ENCODE measurements at regions of chr17 and their contacts with region 1.

Region 1: GRCh38 chr17:44775136-44775837 is 16.5 kb downstream of the ADAM11 start:
- DNase-seq: peak; percentile 99
- H3K4me3 Mint-ChIP-seq: peak overlapping the region; percentile 85
- H3K27ac Mint-ChIP-seq: peak overlapping the region; percentile 90
- H3K4me1 Mint-ChIP-seq: peaks cover 17% of the 10 kb centered on the region
- H3K27me3 Mint-ChIP-seq: peaks cover 70% of the 10 kb centered on the region

Region 2: GRCh38 chr17:44473367-44473766 is 301.9 kb before region 1 on chr17:
- CTCF ChIA-PET with region 1: no interaction called
- DNase-seq: no peak
- H3K4me3 Mint-ChIP-seq: no peak overlapping the region
- H3K27ac Mint-ChIP-seq: no peak overlapping the region
- H3K4me1 Mint-ChIP-seq: no peaks in the 10 kb centered on the region
- H3K27me3 Mint-ChIP-seq: no peaks in the 10 kb centered on the region

Region 3: GRCh38 chr17:44565866-44566443 is 209.3 kb before region 1 on chr17:
- CTCF ChIA-PET with region 1: no interaction called
- DNase-seq: no peak
- H3K4me3 Mint-ChIP-seq: no peak overlapping the region
- H3K27ac Mint-ChIP-seq: no peak overlapping the region
- H3K4me1 Mint-ChIP-seq: no peaks in the 10 kb centered on the region
- H3K27me3 Mint-ChIP-seq: peaks cover 42% of the 10 kb centered on the region

Region 4: DNA sequence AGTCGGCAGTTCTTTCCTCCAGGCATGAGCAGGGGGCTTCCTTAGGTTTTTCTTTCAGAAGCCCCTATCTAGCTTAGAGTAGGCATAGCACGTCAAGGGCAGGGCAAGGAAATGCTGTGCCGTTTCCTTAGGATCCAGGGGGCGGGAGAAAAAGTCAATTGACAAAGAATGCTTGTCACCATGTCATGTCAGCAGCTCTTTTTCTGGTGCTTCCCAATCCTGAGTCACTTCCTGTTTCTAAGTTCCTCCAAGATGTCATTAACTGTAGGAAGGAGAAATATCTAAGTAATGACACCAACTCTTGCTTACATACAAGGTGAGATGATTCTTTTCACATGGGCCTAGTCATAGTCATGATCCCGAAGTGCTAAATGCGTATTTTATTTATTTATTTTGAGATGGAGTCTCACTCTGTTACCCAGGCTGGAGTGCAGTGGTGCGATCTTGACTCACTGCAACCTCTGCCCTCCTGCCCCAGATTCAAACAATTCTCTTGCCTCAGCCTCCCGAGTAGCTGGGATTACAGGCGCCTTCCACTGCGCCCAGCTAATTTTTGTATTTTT is 19.6 kb after region 1 on chr17:
- CTCF ChIA-PET with region 1: interaction called, 14 read pairs
- DNase-seq: no peak
- H3K4me3 Mint-ChIP-seq: no peak overlapping the region
- H3K27ac Mint-ChIP-seq: no peak overlapping the region
- H3K4me1 Mint-ChIP-seq: peaks cover 8% of the 10 kb centered on the region
- H3K27me3 Mint-ChIP-seq: peaks cover 11% of the 10 kb centered on the region

Region 5: GRCh38 chr17:44807817-44808155 is 32.5 kb after region 1 on chr17:
- CTCF ChIA-PET with region 1: interaction called, 10 read pairs
- DNase-seq: no peak
- H3K4me3 Mint-ChIP-seq: no peak overlapping the region
- H3K27ac Mint-ChIP-seq: no peak overlapping the region
- H3K4me1 Mint-ChIP-seq: no peaks in the 10 kb centered on the region
- H3K27me3 Mint-ChIP-seq: peaks cover 36% of the 10 kb centered on the region

Region 6: DNA sequence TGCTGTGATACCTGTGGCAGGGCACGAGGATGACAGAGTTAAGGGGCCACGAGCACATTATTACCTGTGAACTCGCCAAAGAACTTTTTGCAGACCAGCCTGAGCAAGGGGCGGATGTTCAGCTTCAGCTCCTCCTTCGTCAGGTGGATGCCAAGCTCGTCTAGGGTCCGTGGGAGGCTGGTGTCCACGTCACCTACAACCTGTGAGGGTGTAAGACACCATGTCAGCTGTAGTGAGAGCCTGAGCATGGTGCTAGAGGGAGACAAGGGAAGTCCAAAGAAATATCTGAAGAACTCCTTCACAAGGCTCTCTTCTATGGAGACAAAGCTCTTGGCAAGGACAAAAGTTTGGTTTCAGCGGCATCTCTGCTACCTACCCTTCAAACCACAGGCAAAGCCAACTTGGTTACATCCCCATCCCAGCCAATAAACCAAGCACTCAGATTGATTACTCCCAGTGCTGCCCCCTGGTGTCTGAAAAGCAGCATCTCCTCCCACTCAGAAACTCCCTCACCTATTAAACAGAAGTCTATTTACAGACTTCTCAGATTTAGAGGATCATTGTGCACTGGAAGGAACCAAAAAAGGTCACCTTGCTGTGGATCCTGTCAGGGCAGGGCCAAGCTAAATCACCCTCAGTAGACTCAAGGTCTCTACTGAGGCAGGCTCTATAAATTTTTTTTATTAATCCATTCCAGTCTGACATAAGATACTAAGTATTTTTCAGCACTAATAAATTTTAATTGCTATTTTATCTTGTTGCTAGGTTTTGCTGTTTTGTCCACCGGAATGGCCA is 89.8 kb after region 1 on chr17:
- CTCF ChIA-PET with region 1: interaction called, 215 read pairs
- DNase-seq: peak; percentile 80
- H3K4me3 Mint-ChIP-seq: no peak overlapping the region
- H3K27ac Mint-ChIP-seq: no peak overlapping the region
- H3K4me1 Mint-ChIP-seq: no peaks in the 10 kb centered on the region
- H3K27me3 Mint-ChIP-seq: no peaks in the 10 kb centered on the region

Region 7: DNA sequence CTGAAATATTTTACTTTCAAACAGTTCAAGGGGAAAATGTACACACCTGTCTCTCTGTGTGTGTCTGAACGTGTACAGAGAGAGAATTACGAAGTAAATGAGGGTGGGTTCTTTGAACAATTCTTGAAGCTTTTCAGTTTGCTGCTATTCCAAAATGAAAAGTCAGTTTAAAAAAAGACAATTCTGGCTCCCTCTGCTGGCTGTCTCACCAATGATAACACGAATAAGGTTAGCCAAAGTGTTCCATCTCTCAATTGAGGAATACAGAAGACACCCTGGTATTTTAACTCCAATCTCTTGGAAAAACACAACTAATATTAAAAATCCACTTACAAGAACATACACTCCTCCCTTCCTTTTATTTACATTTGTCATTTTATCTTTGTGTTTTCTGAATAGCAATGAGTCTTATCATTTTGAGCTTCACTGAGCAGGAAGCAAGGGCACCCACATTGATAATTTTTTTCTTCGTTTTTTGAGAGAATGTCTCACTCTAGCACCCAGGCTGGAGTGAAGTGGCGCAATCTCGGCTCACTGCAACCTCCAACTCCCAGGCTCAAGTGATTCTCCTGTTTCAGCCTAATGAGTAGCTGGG is 103.4 kb after region 1 on chr17:
- CTCF ChIA-PET with region 1: interaction called, 19 read pairs
- DNase-seq: peak; percentile 54
- H3K4me3 Mint-ChIP-seq: no peak overlapping the region
- H3K27ac Mint-ChIP-seq: no peak overlapping the region
- H3K4me1 Mint-ChIP-seq: no peaks in the 10 kb centered on the region
- H3K27me3 Mint-ChIP-seq: no peaks in the 10 kb centered on the region

Region 8: DNA sequence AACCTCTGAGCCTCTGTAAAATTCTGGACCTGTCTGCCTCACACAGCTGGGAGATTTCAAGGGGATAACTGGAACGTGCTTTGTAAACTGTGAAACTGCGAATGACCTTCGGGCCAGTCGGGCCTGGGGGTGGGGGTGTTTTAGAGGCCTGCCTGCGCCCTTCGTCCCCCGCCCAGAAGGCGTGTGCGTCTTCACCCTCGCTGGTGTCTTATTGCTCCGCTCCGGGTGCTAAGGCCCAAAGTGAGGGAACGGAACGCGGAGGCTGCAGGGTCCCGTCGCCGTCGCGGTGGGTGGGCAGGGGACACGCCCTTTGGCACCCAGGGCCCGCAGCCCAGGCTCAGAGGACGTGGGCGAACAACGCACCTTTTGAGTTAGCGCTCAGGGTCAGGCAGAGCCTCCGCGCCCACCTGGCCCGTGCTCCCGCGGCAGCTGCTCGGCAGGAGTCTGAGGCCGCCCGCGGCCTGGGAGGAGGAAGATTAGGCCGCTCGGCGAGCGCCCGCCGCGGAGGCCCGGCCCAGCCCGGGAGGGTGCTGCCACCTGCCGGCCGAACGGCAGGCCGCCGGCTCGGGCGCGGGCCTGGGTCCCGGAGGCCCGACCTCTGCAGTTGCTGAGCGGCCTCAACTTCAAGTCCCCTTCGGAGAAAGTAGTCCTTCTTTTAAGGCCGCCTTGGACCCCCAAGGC is 246.5 kb after region 1 on chr17:
- CTCF ChIA-PET with region 1: interaction called, 20 read pairs
- DNase-seq: peak; percentile 73
- H3K4me3 Mint-ChIP-seq: no peak overlapping the region
- H3K27ac Mint-ChIP-seq: no peak overlapping the region
- H3K4me1 Mint-ChIP-seq: peaks cover 21% of the 10 kb centered on the region
- H3K27me3 Mint-ChIP-seq: peaks cover 54% of the 10 kb centered on the region